ENCODE measurements at regions of chr2 and their contacts with region 1.

Region 1: GRCh38 chr2:62410015-62410453 is 96.0 kb downstream of the TMEM17 start:
- DNase-seq: no peak
- H3K4me3 ChIP-seq: no peak overlapping the region
- H3K27ac ChIP-seq: no peak overlapping the region
- H3K4me1 ChIP-seq: peaks cover 18% of the 10 kb centered on the region
- H3K27me3 ChIP-seq: no peaks in the 10 kb centered on the region
- CTCF ChIP-seq: peak in 1 of 2 donors; percentile 32

Region 2: GRCh38 chr2:61922714-61923113 is 487.3 kb before region 1 on chr2:
- CTCF ChIA-PET with region 1: no interaction called
- dilution Hi-C with region 1: no loop called
- in situ Hi-C with region 1: loop called (anchors 5 kb)
- intact Hi-C with region 1: loop called (anchors 1 kb)
- DNase-seq: no peak
- H3K4me3 ChIP-seq: no peak overlapping the region
- H3K27ac ChIP-seq: no peak overlapping the region
- H3K4me1 ChIP-seq: no peaks in the 10 kb centered on the region
- H3K27me3 ChIP-seq: no peaks in the 10 kb centered on the region
- CTCF ChIP-seq: no peak

Region 3: GRCh38 chr2:61993444-61994024 is 416.5 kb before region 1 on chr2:
- CTCF ChIA-PET with region 1: no interaction called
- dilution Hi-C with region 1: no loop called
- in situ Hi-C with region 1: loop called (anchors 5 kb)
- intact Hi-C with region 1: loop called (anchors 1 kb)
- DNase-seq: peak; percentile 44
- H3K4me3 ChIP-seq: no peak overlapping the region
- H3K27ac ChIP-seq: no peak overlapping the region
- H3K4me1 ChIP-seq: no peaks in the 10 kb centered on the region
- H3K27me3 ChIP-seq: no peaks in the 10 kb centered on the region
- CTCF ChIP-seq: peak; percentile 79 to 94

Region 4: GRCh38 chr2:62195421-62196277 is 214.4 kb before region 1 on chr2 and contains the start of gene B3GNT2:
- CTCF ChIA-PET with region 1: no interaction called
- dilution Hi-C with region 1: no loop called
- in situ Hi-C with region 1: no loop called
- intact Hi-C with region 1: loop called (anchors 2 kb)
- DNase-seq: peak; percentile 66
- H3K4me3 ChIP-seq: peak within 1 kb of the TSS; percentile 73 to 95 (median 76)
- H3K27ac ChIP-seq: peak within 1 kb of the TSS; percentile 68
- H3K4me1 ChIP-seq: peaks cover 10% of the 10 kb centered on the region
- H3K27me3 ChIP-seq: no peaks in the 10 kb centered on the region
- CTCF ChIP-seq: no peak
- total RNA-seq, gene B3GNT2: 35.2 to 44.8 TPM

Region 5: GRCh38 chr2:62334440-62335058 is 75.5 kb before region 1 on chr2:
- CTCF ChIA-PET with region 1: no interaction called
- dilution Hi-C with region 1: loop called (anchors 5 kb)
- in situ Hi-C with region 1: no loop called
- intact Hi-C with region 1: no loop called
- DNase-seq: no peak
- H3K4me3 ChIP-seq: no peak overlapping the region
- H3K27ac ChIP-seq: no peak overlapping the region
- H3K4me1 ChIP-seq: no peaks in the 10 kb centered on the region
- H3K27me3 ChIP-seq: no peaks in the 10 kb centered on the region
- CTCF ChIP-seq: no peak

Measured in mammary epithelial cell (primary cell).